A549 (cell line): ENCODE measurements at regions of chr1 and their contacts with region 1.

Region 1: DNA sequence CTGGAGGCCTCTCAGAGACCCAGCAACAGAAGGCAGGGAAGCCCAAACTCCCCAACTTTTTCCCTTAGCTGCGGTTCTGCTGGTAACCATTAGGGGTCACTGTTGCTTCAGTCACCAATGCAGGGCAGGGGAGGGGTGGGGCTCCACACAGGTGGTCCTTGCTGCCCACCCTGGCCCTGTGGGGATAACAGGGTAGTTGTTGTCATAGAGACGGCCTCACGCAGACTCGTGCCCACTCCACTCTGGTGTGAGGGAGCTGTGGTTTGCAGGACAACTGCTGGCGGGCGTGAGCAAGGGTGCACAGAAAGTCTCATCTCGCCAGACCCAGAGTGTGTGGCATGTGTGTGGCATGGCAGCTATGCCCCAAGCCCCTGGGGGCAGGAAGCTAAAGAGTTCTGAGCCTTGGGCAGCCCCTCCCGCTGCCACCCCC is 19.9 kb downstream of the INSRR start:
- DNase-seq: peak in 1 of 2 experiments; percentile 72
- ATAC-seq: peak; percentile 60 to 85; a peak in 5 of 6 replicates
- H3K4me3 ChIP-seq: no peak overlapping the region
- H3K27ac ChIP-seq: no peak overlapping the region
- H3K4me1 ChIP-seq: no peaks in the 10 kb centered on the region
- CTCF ChIP-seq: peak; percentile 81
- EP300 ChIP-seq: no peak
- POLR2A ChIP-seq: no peak
- RAD21 ChIP-seq: peak; percentile 83 to 87

Region 2: GRCh38 chr1:156804572-156805243 is 34.3 kb before region 1 on chr1:
- CTCF ChIA-PET with region 1: interaction called, 13 read pairs
- POLR2A ChIA-PET with region 1: no interaction called
- DNase-seq: no peak
- ATAC-seq: 0 out of 6 replicates have a peak, but pooled peaks of 1 of the 2 experiments have one; percentile 4
- H3K4me3 ChIP-seq: no peak overlapping the region
- H3K27ac ChIP-seq: no peak overlapping the region
- H3K4me1 ChIP-seq: no peaks in the 10 kb centered on the region
- CTCF ChIP-seq: no peak
- EP300 ChIP-seq: no peak
- POLR2A ChIP-seq: no peak
- RAD21 ChIP-seq: no peak

Region 3: DNA sequence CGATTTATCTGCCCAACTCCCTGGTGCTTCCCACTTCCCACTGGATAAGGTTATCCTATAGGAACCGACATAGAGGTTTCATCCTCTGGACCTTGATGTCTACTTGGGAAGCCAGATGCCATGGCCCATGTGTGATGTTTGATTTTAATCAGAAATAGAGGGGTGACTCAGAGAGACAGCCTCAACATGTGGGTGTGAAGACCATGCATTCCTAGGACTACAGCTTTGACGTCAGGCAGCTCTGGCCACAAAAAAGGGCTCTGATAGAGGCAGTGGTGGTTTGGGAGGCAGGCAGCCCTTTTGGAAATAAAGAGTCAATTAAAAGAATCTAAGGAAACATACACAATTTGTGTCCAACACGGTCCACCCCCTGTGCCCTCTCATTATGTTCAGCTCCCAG is 17.2 kb before region 1 on chr1:
- CTCF ChIA-PET with region 1: interaction called, 131 read pairs
- POLR2A ChIA-PET with region 1: no interaction called
- DNase-seq: no peak
- ATAC-seq: no peak
- H3K4me3 ChIP-seq: no peak overlapping the region
- H3K27ac ChIP-seq: no peak overlapping the region
- H3K4me1 ChIP-seq: no peaks in the 10 kb centered on the region
- CTCF ChIP-seq: no peak
- EP300 ChIP-seq: no peak
- POLR2A ChIP-seq: no peak
- RAD21 ChIP-seq: no peak

Region 4: DNA sequence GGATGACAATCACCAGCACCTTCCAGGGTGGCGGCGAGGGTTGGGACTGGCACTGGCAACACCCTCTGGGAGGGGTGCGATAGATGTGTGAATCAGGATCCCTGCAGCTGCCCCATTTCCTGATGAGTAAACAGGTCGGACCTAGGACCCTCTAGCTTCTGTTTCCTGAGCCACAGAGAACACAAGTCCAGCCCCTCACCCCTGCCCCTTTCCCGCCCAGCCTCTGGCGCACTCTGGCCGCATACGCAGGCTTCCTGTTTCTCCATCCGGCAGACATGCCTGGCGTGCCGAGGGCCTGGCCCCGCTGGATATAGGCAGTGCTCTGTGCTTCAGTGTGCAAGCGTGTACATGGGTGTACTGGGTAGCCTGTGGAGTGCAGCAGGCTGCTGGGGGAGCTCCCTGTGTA is 59.2 kb after region 1 on chr1:
- CTCF ChIA-PET with region 1: interaction called, 239 read pairs
- POLR2A ChIA-PET with region 1: no interaction called
- DNase-seq: peak in 1 of 2 experiments; percentile 38
- ATAC-seq: peak in 1 of 2 experiments; percentile 3; a peak in 2 of 6 replicates
- H3K4me3 ChIP-seq: no peak overlapping the region
- H3K27ac ChIP-seq: peak overlapping the region; percentile 88 to 93
- H3K4me1 ChIP-seq: peaks cover 70% of the 10 kb centered on the region
- CTCF ChIP-seq: no peak
- EP300 ChIP-seq: no peak
- POLR2A ChIP-seq: no peak
- RAD21 ChIP-seq: no peak

Region 5: DNA sequence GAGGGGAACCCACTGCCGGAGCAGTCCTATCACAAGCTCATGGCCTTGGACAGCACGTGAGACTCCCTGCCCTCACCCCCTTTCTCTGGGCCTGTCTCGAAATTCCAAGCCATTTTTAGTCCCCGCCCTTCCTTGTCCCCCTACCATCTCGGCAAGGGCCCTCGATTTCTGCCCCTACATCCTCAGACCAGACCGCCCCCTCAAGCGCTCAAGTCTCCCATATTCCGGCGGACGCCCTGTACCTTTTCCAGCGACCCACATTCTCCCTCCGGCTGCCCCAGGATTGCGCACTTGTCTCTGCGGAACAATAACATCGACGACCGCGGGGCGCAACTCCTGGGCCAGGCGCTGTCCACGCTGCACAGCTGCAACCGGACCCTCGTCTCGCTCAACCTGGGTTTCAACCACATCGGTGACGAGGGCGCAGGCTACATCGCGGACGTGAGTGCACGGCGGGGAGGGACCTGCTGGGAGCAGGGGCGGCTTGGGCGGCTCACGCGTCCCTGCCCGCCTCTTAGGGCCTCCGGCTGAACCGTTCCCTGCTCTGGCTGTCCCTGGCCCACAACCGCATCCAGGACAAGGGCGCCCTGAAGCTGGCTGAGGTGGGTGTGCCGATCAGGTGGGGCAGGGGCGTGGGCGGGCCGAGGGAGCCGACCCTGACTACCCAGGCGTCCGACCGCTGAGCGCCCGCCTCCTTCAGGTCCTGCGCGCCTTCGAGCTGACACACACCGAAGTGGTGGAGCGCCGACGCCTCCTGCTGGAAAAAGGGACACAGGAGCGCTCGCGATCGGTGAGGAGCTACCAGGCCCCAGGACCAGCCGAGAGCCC is 88.4 kb after region 1 on chr1:
- CTCF ChIA-PET with region 1: interaction called, 54 read pairs
- POLR2A ChIA-PET with region 1: no interaction called
- DNase-seq: peak; percentile 84 to 87
- ATAC-seq: peak; percentile 85 to 94
- H3K4me3 ChIP-seq: peak overlapping the region; percentile 46
- H3K27ac ChIP-seq: peak overlapping the region; percentile 61 to 82; a peak in 5 of 6 replicates
- H3K4me1 ChIP-seq: peaks cover 7% of the 10 kb centered on the region; the same call in 1 of the 3 replicates
- CTCF ChIP-seq: peak; percentile 82
- EP300 ChIP-seq: no peak
- POLR2A ChIP-seq: no peak
- RAD21 ChIP-seq: peak; percentile 90 to 92